Activated CD8-positive, alpha-beta memory T cell treated with anti-CD3 and anti-CD28 coated beads, Interleukin-2, amount 10 ng/mL, durations not matched to agents 7 days and 5 days (primary cell): ENCODE measurements at regions of chr11 and their contacts with region 1.

Region 1: DNA sequence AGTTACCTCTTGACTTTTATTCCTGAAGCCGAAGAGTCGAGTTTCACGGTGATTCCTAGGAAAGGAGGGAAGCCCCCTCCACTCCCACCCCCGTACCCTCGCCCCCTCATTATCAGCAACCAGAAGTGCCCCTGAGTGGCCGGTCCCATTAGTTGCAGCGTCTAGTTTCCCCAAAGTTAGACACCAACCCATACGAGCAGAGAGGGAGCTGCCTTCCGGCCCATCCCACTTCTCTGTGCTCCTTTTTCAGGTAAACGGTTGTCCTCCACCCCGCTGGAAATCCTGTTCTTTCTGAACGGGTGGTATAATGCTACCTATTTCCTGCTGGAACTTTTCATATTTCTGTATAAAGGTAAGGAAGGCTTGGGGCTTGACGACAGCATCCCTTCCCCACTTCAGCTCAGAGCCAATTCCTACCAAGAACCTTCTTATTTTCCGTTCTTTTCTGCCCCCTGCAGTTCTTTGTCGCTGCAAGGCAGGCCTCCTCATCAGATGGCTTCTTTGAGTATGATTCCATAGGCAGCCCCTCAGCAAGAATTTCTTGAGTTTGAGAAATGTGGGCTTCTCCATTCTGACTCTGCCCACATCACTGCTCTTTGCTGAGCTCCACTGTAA is 701 bp downstream of the TMEM216 start:
- DNase-seq: no peak
- ATAC-seq: no peak
- H3K4me3 Mint-ChIP-seq: peak overlapping the region; percentile 90
- H3K27ac Mint-ChIP-seq: peak overlapping the region; percentile 96
- H3K4me1 Mint-ChIP-seq: peaks cover 22% of the 10 kb centered on the region
- H3K27me3 Mint-ChIP-seq: no peaks in the 10 kb centered on the region

Region 2: DNA sequence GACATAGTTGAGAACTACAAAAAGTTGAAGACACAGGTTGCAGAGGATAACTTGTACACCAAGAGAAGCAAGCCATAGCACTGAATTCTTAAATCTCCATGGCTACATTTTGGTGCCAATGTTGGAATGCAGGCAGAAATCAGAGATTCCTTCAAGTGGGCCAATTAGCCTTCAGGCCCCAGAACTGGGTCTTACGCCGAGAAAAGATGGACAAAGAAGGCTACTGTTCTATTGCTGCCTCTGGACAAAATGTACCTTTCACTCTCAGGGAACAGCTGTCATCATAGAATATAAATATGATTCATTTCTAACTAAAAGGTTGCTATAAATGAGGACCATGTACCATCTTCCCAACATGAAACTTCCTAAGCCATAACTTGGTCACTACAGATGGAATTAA is 13.0 kb after region 1 on chr11:
- CTCF ChIA-PET with region 1: interaction called, 11 read pairs
- DNase-seq: no peak
- ATAC-seq: no peak
- H3K4me3 Mint-ChIP-seq: no peak overlapping the region
- H3K27ac Mint-ChIP-seq: no peak overlapping the region
- H3K4me1 Mint-ChIP-seq: no peaks in the 10 kb centered on the region
- H3K27me3 Mint-ChIP-seq: no peaks in the 10 kb centered on the region